CD4-positive, alpha-beta T cell (primary cell): ENCODE measurements at regions of chr4 and their contacts with region 1.

Region 1: DNA sequence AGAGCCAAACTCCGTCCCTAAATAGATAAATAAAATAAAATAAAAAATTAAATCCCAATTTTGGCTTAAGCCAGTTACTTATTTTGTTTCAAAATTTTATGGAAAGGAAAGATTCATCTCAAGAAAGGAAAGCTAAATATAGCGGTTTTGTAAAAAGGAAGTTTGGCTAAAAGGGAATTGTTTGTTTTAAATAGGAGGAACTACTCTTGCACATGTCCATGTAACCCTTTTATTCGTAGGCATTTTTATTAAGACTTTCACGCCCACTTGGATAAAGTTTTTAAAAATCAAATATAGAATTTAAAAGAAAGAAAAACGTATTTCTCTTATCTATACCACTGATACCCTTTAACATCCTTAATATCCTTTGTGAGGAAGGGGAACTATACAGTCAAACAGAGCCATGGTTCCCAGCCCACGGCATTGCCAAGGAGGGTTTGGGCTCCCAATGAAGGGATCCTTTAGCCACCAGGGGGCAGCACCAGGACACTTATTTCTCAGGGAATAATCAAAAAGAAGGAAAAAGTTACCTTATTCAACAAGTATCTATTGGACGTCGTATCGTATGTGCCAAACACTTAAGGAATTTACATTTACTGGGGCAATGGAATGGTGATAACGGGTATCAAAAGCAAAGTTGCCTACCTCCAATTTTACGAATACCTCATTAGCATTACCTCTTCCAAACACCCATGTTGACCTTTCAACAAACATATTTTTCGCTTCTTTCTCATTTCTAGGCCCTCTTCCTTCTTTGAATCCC is 27.7 kb downstream of the CDKN2AIP start:
- DNase-seq: peak; percentile 71 to 92 (median 80)
- ATAC-seq: peak; percentile 78
- H3K4me3 ChIP-seq: no peak overlapping the region
- H3K4me3 Mint-ChIP-seq: no peak overlapping the region
- H3K27ac ChIP-seq: no peak overlapping the region
- H3K27ac Mint-ChIP-seq: no peak overlapping the region
- H3K4me1 ChIP-seq: peaks cover 3% of the 10 kb centered on the region
- H3K4me1 Mint-ChIP-seq: peaks cover 6% of the 10 kb centered on the region
- H3K27me3 ChIP-seq: no peaks in the 10 kb centered on the region
- H3K27me3 Mint-ChIP-seq: peaks cover 4% of the 10 kb centered on the region
- CTCF ChIP-seq: peak; percentile 92

Region 2: DNA sequence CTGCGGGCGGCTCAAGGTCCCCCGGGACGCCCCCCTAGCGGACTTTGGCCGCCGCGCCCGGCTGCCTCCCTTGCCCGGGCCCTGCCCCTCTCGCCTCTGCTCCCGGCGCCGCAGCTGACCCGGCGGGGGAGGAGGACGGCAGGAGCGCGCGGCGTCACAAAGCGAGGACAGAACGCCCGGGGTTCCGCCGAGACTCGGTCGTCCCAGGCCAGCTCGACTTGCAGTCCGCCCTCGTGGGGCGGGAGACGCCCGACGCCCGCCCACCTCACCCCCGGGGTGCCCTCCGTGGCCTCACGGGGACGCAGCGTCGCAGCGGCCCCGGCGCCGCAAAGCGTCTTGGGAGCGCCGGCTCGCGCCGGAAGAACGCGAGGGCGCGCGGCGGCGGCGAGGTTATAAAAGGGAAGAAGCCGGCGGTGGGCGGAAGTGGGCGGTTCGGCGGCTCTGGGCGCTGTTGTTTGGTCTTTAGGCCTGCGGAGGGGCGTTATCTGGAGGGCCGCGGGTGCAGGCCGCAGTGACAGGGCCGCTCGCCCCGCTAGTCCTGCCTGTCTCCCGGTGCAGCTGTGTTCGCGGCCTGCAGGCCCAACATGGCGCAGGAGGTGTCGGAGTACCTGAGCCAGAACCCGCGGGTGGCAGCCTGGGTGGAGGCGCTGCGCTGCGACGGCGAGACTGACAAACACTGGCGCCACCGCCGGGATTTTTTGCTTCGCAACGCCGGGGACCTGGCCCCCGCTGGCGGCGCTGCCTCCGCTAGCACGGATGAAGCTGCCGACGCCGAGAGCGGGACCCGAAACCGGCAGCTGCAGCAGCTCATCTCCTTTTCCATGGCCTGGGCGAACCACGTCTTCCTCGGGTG is 27.7 kb before region 1 on chr4 and contains the start of gene CDKN2AIP:
- CTCF ChIA-PET with region 1: no interaction called
- POLR2A ChIA-PET with region 1: no interaction called
- intact Hi-C with region 1: loop called in 1 of 2 experiments (anchors 2 kb)
- DNase-seq: peak; percentile 89 to 98 (median 94)
- ATAC-seq: peak; percentile 82
- H3K4me3 ChIP-seq: peak within 1 kb of the TSS; percentile 94
- H3K4me3 Mint-ChIP-seq: peak within 1 kb of the TSS; percentile 98
- H3K27ac ChIP-seq: peak within 1 kb of the TSS; percentile 91
- H3K27ac Mint-ChIP-seq: peak within 1 kb of the TSS; percentile 96
- H3K4me1 ChIP-seq: peaks cover 26% of the 10 kb centered on the region
- H3K4me1 Mint-ChIP-seq: peaks cover 55% of the 10 kb centered on the region
- H3K27me3 ChIP-seq: no peaks in the 10 kb centered on the region
- H3K27me3 Mint-ChIP-seq: no peaks in the 10 kb centered on the region
- CTCF ChIP-seq: no peak
- total RNA-seq, gene CDKN2AIP: 55.7 to 56.9 TPM

Region 3: GRCh38 chr4:183600189-183600685 is 128.1 kb after region 1 on chr4:
- CTCF ChIA-PET with region 1: interaction called, 3 read pairs
- POLR2A ChIA-PET with region 1: no interaction called
- intact Hi-C with region 1: loop called (anchors 1 kb)
- DNase-seq: peak in 5 of 14 experiments; percentile 5 to 34 (median 32)
- ATAC-seq: no peak
- H3K4me3 ChIP-seq: no peak overlapping the region
- H3K4me3 Mint-ChIP-seq: no peak overlapping the region
- H3K27ac ChIP-seq: no peak overlapping the region
- H3K27ac Mint-ChIP-seq: no peak overlapping the region
- H3K4me1 ChIP-seq: no peaks in the 10 kb centered on the region
- H3K4me1 Mint-ChIP-seq: no peaks in the 10 kb centered on the region
- H3K27me3 ChIP-seq: no peaks in the 10 kb centered on the region
- H3K27me3 Mint-ChIP-seq: no peaks in the 10 kb centered on the region
- CTCF ChIP-seq: peak; percentile 35

Region 4: GRCh38 chr4:183722731-183723560 is 250.8 kb after region 1 on chr4:
- CTCF ChIA-PET with region 1: no interaction called
- POLR2A ChIA-PET with region 1: no interaction called
- intact Hi-C with region 1: loop called in 1 of 2 experiments (anchors 5 kb)
- DNase-seq: peak; percentile 9 to 73 (median 34)
- ATAC-seq: peak; percentile 57
- H3K4me3 ChIP-seq: peak overlapping the region; percentile 58
- H3K4me3 Mint-ChIP-seq: peak overlapping the region; percentile 91
- H3K27ac ChIP-seq: no peak overlapping the region
- H3K27ac Mint-ChIP-seq: peak overlapping the region; percentile 80
- H3K4me1 ChIP-seq: peaks cover 23% of the 10 kb centered on the region
- H3K4me1 Mint-ChIP-seq: peaks cover 15% of the 10 kb centered on the region
- H3K27me3 ChIP-seq: no peaks in the 10 kb centered on the region
- H3K27me3 Mint-ChIP-seq: no peaks in the 10 kb centered on the region
- CTCF ChIP-seq: no peak

Region 5: GRCh38 chr4:184100297-184100885 is 628.3 kb after region 1 on chr4:
- CTCF ChIA-PET with region 1: no interaction called
- POLR2A ChIA-PET with region 1: no interaction called
- intact Hi-C with region 1: loop called in 1 of 2 experiments (anchors 5 kb)
- DNase-seq: peak in 7 of 14 experiments; percentile 7 to 54 (median 27)
- ATAC-seq: no peak
- H3K4me3 ChIP-seq: no peak overlapping the region
- H3K4me3 Mint-ChIP-seq: no peak overlapping the region
- H3K27ac ChIP-seq: no peak overlapping the region
- H3K27ac Mint-ChIP-seq: no peak overlapping the region
- H3K4me1 ChIP-seq: no peaks in the 10 kb centered on the region
- H3K4me1 Mint-ChIP-seq: peaks cover 8% of the 10 kb centered on the region
- H3K27me3 ChIP-seq: peaks cover 0 to 6% of the 10 kb centered on the region in 2 experiments
- H3K27me3 Mint-ChIP-seq: peaks cover 25% of the 10 kb centered on the region
- CTCF ChIP-seq: peak; percentile 51